Vagina (tissue), 2 donors: ENCODE measurements at regions of chr2 and their contacts with region 1.

Region 1: GRCh38 chr2:170314744-170315447 is 136.9 kb downstream of the MYO3B start:
- DNase-seq: no peak
- H3K4me3 ChIP-seq: no peak overlapping the region
- H3K27ac ChIP-seq: no peak overlapping the region
- H3K4me1 ChIP-seq: no peaks in the 10 kb centered on the region
- H3K27me3 ChIP-seq: no peaks in the 10 kb centered on the region
- CTCF ChIP-seq: no peak
- POLR2A ChIP-seq: no peak

Region 2: GRCh38 chr2:170298861-170299429 is 16.0 kb before region 1 on chr2:
- intact Hi-C with region 1: loop called (anchors 1 kb)
- DNase-seq: no peak
- H3K4me3 ChIP-seq: no peak overlapping the region
- H3K27ac ChIP-seq: no peak overlapping the region
- H3K4me1 ChIP-seq: no peaks in the 10 kb centered on the region
- H3K27me3 ChIP-seq: no peaks in the 10 kb centered on the region
- CTCF ChIP-seq: no peak
- POLR2A ChIP-seq: no peak

Region 3: GRCh38 chr2:171201271-171201670 is 886.4 kb after region 1 on chr2:
- intact Hi-C with region 1: no loop called
- DNase-seq: no peak
- H3K4me3 ChIP-seq: no peak overlapping the region
- H3K27ac ChIP-seq: no peak overlapping the region
- H3K4me1 ChIP-seq: no peaks in the 10 kb centered on the region
- H3K27me3 ChIP-seq: no peaks in the 10 kb centered on the region
- CTCF ChIP-seq: no peak
- POLR2A ChIP-seq: no peak